ENCODE measurements at regions of chr2 and their contacts with region 1.

Region 1: GRCh38 chr2:230824406-230824978 is 40.2 kb upstream of the ITM2C start:
- DNase-seq: peak; percentile 83
- H3K4me3 ChIP-seq: peak overlapping the region in 1 of 2 experiments; percentile 33; a peak in 2 of 4 replicates
- H3K27ac ChIP-seq: no peak overlapping the region
- H3K4me1 ChIP-seq: no peaks in the 10 kb centered on the region; a peak in 1 of 4 replicates
- H3K27me3 ChIP-seq: no peaks in the 10 kb centered on the region
- CTCF ChIP-seq: peak; percentile 72
- EP300 ChIP-seq: no peak
- RAD21 ChIP-seq: peak; percentile 94

Region 2: GRCh38 chr2:230520875-230521155 is 303.7 kb before region 1 on chr2:
- CTCF ChIA-PET with region 1: no interaction called
- POLR2A ChIA-PET with region 1: no interaction called
- DNase-seq: no peak
- H3K4me3 ChIP-seq: no peak overlapping the region
- H3K27ac ChIP-seq: no peak overlapping the region
- H3K4me1 ChIP-seq: no peaks in the 10 kb centered on the region
- H3K27me3 ChIP-seq: no peaks in the 10 kb centered on the region
- CTCF ChIP-seq: no peak
- EP300 ChIP-seq: no peak
- RAD21 ChIP-seq: no peak

Region 3: DNA sequence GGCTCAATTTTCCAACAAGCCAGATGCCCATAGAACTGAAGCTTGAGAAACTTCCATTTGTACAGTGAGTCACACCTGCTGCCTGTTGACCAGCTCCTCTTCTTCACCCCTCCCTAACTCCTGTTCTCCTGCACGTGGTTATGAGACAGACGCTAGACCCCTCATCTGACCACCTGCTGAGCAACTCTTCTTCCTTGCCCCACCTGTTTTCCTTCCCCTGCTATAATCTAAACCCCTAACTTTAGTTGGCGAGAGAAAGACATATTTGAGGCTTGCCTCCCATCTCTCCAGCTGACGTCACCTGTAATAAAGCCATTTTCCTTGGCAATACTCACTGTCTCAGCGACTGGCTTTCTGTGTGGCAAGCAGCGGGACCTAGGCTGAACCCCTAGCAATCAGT is 18.0 kb after region 1 on chr2:
- CTCF ChIA-PET with region 1: interaction called, 27 read pairs
- POLR2A ChIA-PET with region 1: no interaction called
- DNase-seq: no peak
- H3K4me3 ChIP-seq: no peak overlapping the region
- H3K27ac ChIP-seq: no peak overlapping the region
- H3K4me1 ChIP-seq: no peaks in the 10 kb centered on the region
- H3K27me3 ChIP-seq: no peaks in the 10 kb centered on the region; the same call in 1 of the 2 replicates
- CTCF ChIP-seq: no peak
- EP300 ChIP-seq: no peak
- RAD21 ChIP-seq: no peak

Region 4: DNA sequence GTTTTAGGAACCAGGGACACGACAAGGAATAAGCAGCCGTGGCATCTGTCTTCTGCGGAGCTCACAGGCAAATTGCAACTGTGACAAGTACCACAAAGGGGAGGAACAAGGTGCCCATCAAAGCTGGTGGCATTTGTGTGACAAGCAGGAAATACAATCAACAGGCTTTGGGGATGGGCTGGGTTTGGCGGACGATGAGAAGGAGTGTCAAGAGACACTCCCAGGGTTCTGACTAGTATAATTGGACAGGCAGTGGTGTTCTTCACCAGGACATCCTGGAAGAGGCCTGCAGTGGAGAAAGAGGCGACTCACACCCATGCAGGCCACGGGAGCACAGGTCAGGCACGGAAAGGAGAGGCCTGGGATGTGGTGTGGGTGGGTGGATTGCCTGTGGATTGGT is 157.2 kb after region 1 on chr2:
- CTCF ChIA-PET with region 1: interaction called, 171 read pairs
- POLR2A ChIA-PET with region 1: no interaction called
- DNase-seq: no peak
- H3K4me3 ChIP-seq: no peak overlapping the region
- H3K27ac ChIP-seq: no peak overlapping the region
- H3K4me1 ChIP-seq: peaks cover 0 to 2% of the 10 kb centered on the region in 2 experiments; a peak in 1 of 4 replicates
- H3K27me3 ChIP-seq: 0 out of 2 replicates have a peak, but pooled peaks cover 4% of the 10 kb centered on the region
- CTCF ChIP-seq: no peak
- EP300 ChIP-seq: no peak
- RAD21 ChIP-seq: no peak

Region 5: DNA sequence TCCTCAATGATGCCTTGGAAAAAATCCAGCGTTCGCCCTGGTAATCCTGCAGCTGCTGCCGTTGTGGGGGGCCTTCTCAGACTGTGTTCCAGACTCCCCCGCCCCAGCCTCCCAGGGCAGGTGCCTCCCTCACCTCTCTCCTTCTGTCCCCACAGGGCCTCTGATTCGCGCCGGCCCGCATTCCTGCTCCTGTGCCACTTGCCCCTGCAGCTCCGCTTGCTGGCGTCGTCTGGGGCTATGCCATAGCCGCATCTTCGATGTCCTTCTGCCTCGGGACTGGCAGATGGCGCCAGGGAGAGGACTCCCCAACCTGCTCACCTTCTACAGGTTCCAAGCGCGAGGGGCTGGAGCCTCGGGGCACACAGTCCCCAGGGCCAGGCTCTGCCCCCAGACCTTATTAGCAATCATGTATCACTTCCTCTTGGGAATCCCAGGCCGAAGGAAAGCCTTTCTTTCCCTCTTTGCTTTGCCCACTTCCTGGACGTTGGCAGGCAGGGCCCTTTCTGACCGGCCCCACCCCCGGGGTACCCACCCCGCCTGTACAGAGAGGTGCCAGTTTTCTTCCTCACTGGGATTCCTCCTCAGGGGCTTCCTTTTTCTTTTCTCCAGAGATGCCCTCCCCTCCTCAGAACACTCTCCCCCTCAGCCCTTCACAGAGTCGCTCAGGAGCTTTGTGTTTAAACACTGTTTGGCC is 175.9 kb after region 1 on chr2:
- CTCF ChIA-PET with region 1: interaction called, 15 read pairs
- POLR2A ChIA-PET with region 1: no interaction called
- DNase-seq: peak; percentile 43
- H3K4me3 ChIP-seq: no peak overlapping the region
- H3K27ac ChIP-seq: no peak overlapping the region
- H3K4me1 ChIP-seq: no peaks in the 10 kb centered on the region
- H3K27me3 ChIP-seq: peaks cover 14% of the 10 kb centered on the region; the same call in 1 of the 2 replicates
- CTCF ChIP-seq: no peak
- EP300 ChIP-seq: no peak
- RAD21 ChIP-seq: no peak

Region 6: DNA sequence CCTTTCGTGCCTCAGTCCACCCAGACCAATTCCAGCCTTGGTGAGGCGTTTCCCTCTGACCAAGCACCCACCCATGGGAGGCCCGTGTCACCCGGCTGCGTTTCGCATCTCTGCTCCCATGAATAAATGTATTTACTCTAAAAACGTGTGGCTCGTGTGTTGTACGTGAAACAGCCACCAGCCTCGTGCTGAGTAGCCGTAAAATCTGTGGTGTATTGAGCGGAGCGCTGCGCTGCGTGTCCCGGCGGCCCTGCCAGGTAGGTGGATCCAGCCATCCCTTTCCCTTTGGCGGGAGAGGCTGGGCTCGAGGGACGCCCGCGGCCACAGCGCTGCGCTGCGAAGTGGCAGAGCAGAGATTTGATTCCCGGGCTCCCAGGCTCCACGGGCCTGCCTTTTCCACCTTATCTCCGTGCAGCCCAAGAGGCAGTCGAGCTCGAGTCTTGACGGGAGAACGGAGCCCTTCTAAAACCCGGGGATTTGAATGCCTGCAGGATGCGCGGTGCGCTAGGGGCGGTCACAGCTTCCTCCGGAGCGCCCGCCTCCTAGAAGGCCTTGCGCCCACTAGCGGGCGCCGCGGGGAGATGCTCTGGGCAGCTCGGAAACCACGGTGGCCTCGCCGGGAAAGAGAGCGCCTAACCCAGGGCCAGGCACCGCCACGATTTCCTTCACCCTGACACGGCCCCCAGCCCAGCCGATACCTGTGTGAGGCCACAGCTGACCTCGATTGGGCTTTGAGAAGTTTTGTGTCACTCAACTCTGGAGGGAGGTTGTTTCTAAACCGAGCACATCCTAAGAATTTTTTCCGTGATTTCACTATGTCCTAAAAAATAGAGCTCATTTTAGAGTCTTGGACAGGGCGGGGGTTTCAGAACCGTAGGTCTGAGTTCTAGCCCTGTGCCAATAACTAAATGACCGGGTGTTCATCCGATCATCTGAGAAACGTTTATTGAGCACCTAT is 228.3 kb after region 1 on chr2:
- CTCF ChIA-PET with region 1: interaction called, 38 read pairs
- POLR2A ChIA-PET with region 1: interaction called, 3 read pairs
- DNase-seq: peak; percentile 90
- H3K4me3 ChIP-seq: peak overlapping the region; percentile 60 to 68
- H3K27ac ChIP-seq: peak overlapping the region in 1 of 2 experiments; percentile 56; a peak in 2 of 4 replicates
- H3K4me1 ChIP-seq: peaks cover 0 to 10% of the 10 kb centered on the region in 2 experiments; a peak in 2 of 4 replicates
- H3K27me3 ChIP-seq: no peaks in the 10 kb centered on the region
- CTCF ChIP-seq: peak; percentile 88
- EP300 ChIP-seq: no peak
- RAD21 ChIP-seq: peak; percentile 53